ENCODE measurements at regions of chr1 and their contacts with region 1.

Region 1: GRCh38 chr1:152654110-152654509 is 9.1 kb upstream of the LCE2D start:
- DNase-seq: no peak
- ATAC-seq: no peak
- H3K4me3 ChIP-seq: no peak overlapping the region
- H3K27ac ChIP-seq: no peak overlapping the region
- H3K4me1 ChIP-seq: no peaks in the 10 kb centered on the region
- H3K27me3 ChIP-seq: no peaks in the 10 kb centered on the region

Region 2: GRCh38 chr1:152356736-152357135 is 297.4 kb before region 1 on chr1:
- intact Hi-C with region 1: no loop called
- DNase-seq: no peak
- ATAC-seq: no peak
- H3K4me3 ChIP-seq: no peak overlapping the region
- H3K27ac ChIP-seq: no peak overlapping the region
- H3K4me1 ChIP-seq: no peaks in the 10 kb centered on the region
- H3K27me3 ChIP-seq: no peaks in the 10 kb centered on the region

Region 3: GRCh38 chr1:152777525-152778137 is 123.5 kb after region 1 on chr1:
- intact Hi-C with region 1: no loop called
- DNase-seq: no peak
- ATAC-seq: no peak
- H3K4me3 ChIP-seq: no peak overlapping the region
- H3K27ac ChIP-seq: no peak overlapping the region
- H3K4me1 ChIP-seq: no peaks in the 10 kb centered on the region
- H3K27me3 ChIP-seq: no peaks in the 10 kb centered on the region

Region 4: GRCh38 chr1:152823291-152823690 is 169.2 kb after region 1 on chr1:
- intact Hi-C with region 1: no loop called
- DNase-seq: no peak
- ATAC-seq: no peak
- H3K4me3 ChIP-seq: no peak overlapping the region
- H3K27ac ChIP-seq: no peak overlapping the region
- H3K4me1 ChIP-seq: no peaks in the 10 kb centered on the region
- H3K27me3 ChIP-seq: peaks cover 0 to 2% of the 10 kb centered on the region in 2 donors

Region 5: DNA sequence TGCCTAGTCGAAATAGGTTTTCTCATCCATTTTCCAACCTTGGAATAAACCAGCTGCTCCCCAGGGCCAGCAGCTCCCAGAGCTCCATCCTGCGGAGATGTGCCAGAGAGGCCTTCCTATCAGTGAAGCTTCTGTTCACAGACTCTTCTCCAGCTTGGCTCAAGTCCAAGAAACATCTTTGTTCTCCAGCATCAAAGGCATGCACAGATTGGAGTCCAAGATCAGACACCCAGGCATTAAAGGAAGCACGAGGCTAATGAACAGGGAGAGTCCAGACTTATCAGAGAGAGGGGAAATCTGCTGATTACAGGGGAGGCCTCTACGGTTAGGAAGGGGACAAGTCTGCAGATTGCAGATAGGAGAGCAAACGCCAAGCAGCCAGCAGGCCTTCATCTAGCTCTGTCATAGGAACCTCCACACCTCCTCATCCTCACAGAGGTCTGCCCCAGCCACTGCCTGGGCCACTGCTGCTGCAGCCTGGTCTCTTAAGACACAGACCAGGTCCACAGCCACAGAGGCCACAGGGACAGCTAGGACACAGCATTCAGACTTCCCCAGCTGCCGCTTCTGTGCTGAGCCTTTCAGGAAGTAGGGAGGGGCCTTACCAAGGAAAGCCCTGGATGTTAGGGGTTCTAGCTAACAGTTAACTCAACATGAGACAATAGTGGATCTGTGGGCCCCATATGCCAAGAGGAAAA is 566.6 kb after region 1 on chr1:
- intact Hi-C with region 1: loop called in 1 of 2 experiments (anchors 10 kb)
- DNase-seq: no peak
- ATAC-seq: no peak
- H3K4me3 ChIP-seq: no peak overlapping the region
- H3K27ac ChIP-seq: no peak overlapping the region
- H3K4me1 ChIP-seq: no peaks in the 10 kb centered on the region
- H3K27me3 ChIP-seq: no peaks in the 10 kb centered on the region

Region 6: GRCh38 chr1:153465811-153466636 is 811.9 kb after region 1 on chr1:
- intact Hi-C with region 1: no loop called
- DNase-seq: peak; percentile 70 to 90
- ATAC-seq: peak; percentile 82
- H3K4me3 ChIP-seq: no peak overlapping the region
- H3K27ac ChIP-seq: no peak overlapping the region
- H3K4me1 ChIP-seq: no peaks in the 10 kb centered on the region
- H3K27me3 ChIP-seq: no peaks in the 10 kb centered on the region